ENCODE measurements at regions of chr9 and their contacts with region 1.

Region 1: DNA sequence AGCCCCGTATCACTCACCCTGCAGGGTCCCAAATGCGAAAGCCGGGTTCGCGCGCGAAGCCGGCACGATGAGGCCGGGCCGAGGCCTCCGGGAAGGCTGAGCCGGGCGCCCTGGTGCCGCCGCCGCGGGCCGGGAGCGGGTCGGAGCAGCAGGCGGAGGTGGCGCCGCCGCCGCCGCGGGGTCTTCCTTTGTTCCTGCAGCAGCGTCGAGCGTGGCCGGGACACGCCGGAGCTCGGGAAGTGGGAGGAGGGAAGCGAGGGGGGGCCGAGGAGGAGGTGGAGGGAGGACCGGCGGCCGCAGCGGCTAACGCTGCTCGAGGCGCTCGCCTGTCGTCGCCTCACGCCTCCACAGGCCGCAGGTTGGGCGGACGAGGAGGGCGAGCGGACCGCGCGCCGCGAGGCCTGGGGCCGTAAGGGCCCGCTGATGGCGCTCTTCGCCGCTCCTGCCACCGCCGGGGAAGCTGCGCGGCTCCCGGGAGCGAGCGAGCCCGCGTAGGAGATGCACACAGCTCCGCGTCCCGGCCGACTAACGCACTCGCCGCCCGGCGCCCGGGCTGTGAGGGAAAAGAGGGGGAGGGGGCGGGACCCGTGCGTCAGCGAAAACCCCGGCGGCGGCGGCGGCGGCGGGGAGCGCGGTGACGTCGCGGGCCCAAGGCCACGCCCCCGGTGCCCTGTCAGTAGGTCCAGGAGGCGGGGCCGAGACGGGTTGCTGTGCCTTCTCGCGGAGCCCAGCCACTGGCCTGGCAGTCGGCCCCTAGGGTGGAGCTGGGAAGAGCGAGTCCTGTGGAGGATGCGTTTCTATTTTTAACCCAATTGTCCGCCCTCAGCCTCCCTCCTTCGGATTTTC is at the start of gene ZFAND5:
- DNase-seq: peak; percentile 89
- ATAC-seq: peak; percentile 80
- H3K4me3 Mint-ChIP-seq: peak within 1 kb of the TSS; percentile 96
- H3K27ac Mint-ChIP-seq: peak within 1 kb of the TSS; percentile 98
- H3K4me1 Mint-ChIP-seq: peaks cover 40% of the 10 kb centered on the region
- H3K27me3 Mint-ChIP-seq: no peaks in the 10 kb centered on the region
- CTCF ChIP-seq: no peak
- total RNA-seq, gene ZFAND5: 79.2 and 79.5 TPM in 2 replicates

Region 2: DNA sequence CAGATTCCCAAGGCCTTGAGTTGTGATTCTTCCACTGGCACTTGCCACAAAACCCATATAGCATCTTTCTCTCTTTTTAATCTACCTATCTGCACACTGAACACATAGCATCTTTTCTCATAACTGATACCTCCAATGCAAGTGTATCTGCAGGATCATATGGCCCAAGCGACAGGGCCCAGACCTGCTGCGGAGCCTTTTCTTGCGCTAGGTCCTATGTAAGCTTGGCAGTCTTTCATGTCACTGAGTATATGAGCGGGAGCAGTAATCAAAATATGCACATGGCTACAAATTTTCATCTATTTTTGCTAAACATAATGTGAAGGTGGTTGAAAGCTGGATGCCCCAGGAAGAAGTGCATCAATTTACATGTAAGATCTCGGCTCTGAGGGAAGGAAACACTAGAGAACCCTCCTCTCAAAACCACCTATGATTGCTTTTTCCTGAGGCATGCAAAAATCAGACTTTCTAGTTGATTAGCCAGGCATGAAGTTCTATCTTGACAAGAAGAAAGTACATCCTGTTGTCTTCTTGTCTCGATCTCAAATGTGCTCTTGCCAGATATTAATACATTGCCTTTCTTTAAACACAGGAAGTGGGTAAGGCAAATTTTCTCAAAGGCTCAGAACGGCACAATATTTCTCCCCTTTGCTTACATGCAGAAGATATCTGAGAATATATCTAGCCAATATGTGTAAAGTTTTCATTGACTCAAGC is 569.6 kb before region 1 on chr9:
- CTCF ChIA-PET with region 1: no interaction called
- POLR2A ChIA-PET with region 1: interaction called, 5 read pairs
- intact Hi-C with region 1: loop called (anchors 2 kb)
- DNase-seq: no peak
- ATAC-seq: peak; percentile 84
- H3K4me3 Mint-ChIP-seq: peak overlapping the region; percentile 67
- H3K27ac Mint-ChIP-seq: peak overlapping the region; percentile 87
- H3K4me1 Mint-ChIP-seq: peaks cover 79% of the 10 kb centered on the region
- H3K27me3 Mint-ChIP-seq: no peaks in the 10 kb centered on the region
- CTCF ChIP-seq: no peak

Region 3: GRCh38 chr9:72305102-72305546 is 59.8 kb before region 1 on chr9:
- CTCF ChIA-PET with region 1: interaction called, 7 read pairs
- POLR2A ChIA-PET with region 1: interaction called, 63 read pairs
- intact Hi-C with region 1: loop called (anchors 1 kb)
- DNase-seq: peak; percentile 35
- ATAC-seq: peak; percentile 79
- H3K4me3 Mint-ChIP-seq: peak overlapping the region; percentile 73
- H3K27ac Mint-ChIP-seq: peak overlapping the region; percentile 95
- H3K4me1 Mint-ChIP-seq: peaks cover 62% of the 10 kb centered on the region
- H3K27me3 Mint-ChIP-seq: no peaks in the 10 kb centered on the region
- CTCF ChIP-seq: no peak

Region 4: DNA sequence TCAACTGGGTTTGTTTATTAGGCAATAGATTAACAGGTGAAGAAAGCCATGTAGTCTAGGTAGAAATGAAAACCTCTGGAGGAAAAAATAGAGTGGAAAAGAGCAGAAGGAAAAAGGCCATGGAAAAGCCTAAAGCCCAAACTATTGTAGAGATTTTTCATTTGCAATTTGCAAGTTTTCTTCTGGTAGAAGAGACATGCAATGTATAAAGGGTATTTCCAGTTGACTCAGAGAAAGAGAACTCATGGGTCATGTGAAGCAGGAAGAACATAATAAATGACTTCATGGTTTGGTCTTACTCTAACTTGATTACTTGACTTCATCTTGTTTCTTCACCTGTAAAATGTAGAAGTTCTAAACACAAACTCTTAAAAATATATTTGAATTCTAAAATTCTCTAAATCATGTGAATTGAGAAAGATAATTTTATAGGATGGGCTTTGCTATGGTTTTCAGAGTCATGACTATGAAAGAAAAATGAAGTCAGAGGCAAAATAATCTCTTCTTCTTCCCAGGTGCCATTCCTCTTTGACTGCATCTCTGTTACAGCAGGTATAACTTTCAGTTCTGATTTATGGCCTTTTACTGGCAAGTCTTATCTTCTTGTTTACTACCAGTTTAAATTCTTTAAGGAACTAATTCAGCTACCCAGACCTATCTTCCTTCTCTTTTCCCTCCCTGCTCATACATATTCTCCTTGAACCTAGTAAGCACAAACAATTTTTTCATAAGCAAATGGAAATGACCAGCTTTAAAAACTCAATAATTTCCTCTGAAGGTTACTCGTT is 108.8 kb after region 1 on chr9:
- CTCF ChIA-PET with region 1: no interaction called
- POLR2A ChIA-PET with region 1: no interaction called
- intact Hi-C with region 1: loop called (anchors 1 kb)
- DNase-seq: no peak
- ATAC-seq: peak; percentile 78
- H3K4me3 Mint-ChIP-seq: no peak overlapping the region
- H3K27ac Mint-ChIP-seq: peak overlapping the region; percentile 75
- H3K4me1 Mint-ChIP-seq: peaks cover 12% of the 10 kb centered on the region
- H3K27me3 Mint-ChIP-seq: no peaks in the 10 kb centered on the region
- CTCF ChIP-seq: no peak

Region 5: DNA sequence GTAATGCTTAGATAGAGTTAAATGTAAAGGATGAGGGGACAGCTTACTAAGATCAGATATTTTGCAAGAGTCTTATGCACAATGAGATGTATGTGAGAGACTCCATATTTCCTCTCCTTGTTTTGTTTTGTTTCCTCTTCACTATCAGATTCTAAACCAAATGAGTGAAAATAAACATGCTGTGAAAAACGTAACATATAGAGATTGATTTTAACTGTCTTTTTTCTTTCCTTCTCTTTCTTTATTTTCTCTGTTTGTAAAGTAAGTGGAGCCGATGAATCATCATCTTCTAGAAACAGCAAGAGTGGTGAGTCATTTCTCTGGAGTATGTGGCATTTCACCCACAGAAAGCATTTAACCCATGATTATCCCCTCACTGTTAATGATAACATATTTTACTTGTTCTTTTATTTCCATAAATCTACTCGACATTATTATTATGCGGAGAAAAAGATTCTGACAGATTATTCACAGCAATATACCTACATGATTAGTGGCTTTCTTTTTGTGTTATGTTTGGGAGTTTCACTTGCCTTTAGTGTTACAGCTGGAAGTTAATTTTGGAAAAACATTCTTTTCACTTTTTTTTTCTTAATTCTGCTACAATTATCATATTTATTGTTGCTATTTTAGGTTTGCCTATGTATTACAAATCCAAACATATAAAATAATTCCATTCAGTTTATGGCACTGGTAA is 784.6 kb after region 1 on chr9:
- CTCF ChIA-PET with region 1: no interaction called
- POLR2A ChIA-PET with region 1: no interaction called
- intact Hi-C with region 1: loop called (anchors 5 kb)
- DNase-seq: no peak
- ATAC-seq: peak; percentile 76
- H3K4me3 Mint-ChIP-seq: peak overlapping the region; percentile 13
- H3K27ac Mint-ChIP-seq: peak overlapping the region; percentile 32
- H3K4me1 Mint-ChIP-seq: peaks cover 20% of the 10 kb centered on the region
- H3K27me3 Mint-ChIP-seq: peaks cover 3% of the 10 kb centered on the region
- CTCF ChIP-seq: no peak

Measured in activated B cell treated with CpG ODN at 0.5 μM for 24 hours (primary cell).